ENCODE measurements at regions of chr12 and their contacts with region 1.

Region 1: DNA sequence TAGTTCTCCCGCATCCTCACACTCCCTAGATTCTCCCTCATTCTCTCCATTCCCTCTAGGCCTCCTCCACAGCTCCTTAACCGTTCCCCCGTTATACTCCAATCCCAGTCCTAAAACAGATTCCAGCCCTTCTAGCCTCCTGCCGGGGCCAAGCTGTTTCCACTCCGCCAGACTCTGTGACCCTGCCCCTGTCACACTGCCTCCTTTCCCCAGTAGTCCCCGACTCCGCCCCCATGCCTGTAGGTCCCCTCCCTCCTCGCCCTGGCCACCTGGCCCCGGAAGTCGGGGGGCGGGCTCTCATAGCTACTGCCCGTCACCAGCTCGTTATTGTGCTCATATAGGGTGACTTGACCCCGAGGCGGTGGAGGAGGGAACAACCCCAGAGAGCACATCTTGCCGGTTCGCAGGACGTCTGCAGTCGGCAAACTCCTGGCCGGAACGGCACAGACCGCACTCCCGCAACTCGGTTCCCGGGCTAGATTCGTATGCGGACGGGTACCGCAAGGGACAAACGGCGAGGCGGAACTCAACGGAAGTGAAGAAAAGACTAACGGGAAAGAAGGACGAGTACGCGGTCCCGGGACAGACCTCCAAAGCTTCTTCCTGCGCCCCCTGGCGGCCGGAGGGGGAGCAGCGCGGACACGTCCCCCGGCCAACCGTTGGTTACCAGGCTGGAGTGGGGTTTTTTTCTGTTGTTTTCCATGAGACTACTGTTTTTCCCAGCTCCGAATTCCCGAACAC is at the start of gene AAAS:
- DNase-seq: peak; percentile 95 to 99 (median 98)
- H3K4me3 ChIP-seq: peak within 1 kb of the TSS; percentile 71 to 97 (median 90)
- H3K27ac ChIP-seq: peak within 1 kb of the TSS; percentile 75 to 85
- H3K4me1 ChIP-seq: peaks cover 4 to 47% (median 36%) of the 10 kb centered on the region in 4 experiments
- H3K27me3 ChIP-seq: no peaks in the 10 kb centered on the region

Region 2: GRCh38 chr12:53159195-53159839 is 161.9 kb before region 1 on chr12:
- CTCF ChIA-PET with region 1: interaction called, 11 read pairs
- POLR2A ChIA-PET with region 1: no interaction called
- DNase-seq: peak; percentile 81 to 90 (median 85)
- H3K4me3 ChIP-seq: no peak overlapping the region
- H3K27ac ChIP-seq: no peak overlapping the region
- H3K4me1 ChIP-seq: peaks cover 0 to 8% (median 2%) of the 10 kb centered on the region in 4 experiments
- H3K27me3 ChIP-seq: no peaks in the 10 kb centered on the region

Region 3: GRCh38 chr12:53295070-53295890 is 26.0 kb before region 1 on chr12 and contains the start of gene PFDN5:
- CTCF ChIA-PET with region 1: interaction called, 171 read pairs
- POLR2A ChIA-PET with region 1: interaction called, 6 read pairs
- DNase-seq: peak; percentile 94 to 95 (median 94)
- H3K4me3 ChIP-seq: peak within 1 kb of the TSS; percentile 83 to 96 (median 89)
- H3K27ac ChIP-seq: peak within 1 kb of the TSS; percentile 93 to 96
- H3K4me1 ChIP-seq: peaks cover 5 to 48% (median 42%) of the 10 kb centered on the region in 4 experiments
- H3K27me3 ChIP-seq: no peaks in the 10 kb centered on the region

Region 4: DNA sequence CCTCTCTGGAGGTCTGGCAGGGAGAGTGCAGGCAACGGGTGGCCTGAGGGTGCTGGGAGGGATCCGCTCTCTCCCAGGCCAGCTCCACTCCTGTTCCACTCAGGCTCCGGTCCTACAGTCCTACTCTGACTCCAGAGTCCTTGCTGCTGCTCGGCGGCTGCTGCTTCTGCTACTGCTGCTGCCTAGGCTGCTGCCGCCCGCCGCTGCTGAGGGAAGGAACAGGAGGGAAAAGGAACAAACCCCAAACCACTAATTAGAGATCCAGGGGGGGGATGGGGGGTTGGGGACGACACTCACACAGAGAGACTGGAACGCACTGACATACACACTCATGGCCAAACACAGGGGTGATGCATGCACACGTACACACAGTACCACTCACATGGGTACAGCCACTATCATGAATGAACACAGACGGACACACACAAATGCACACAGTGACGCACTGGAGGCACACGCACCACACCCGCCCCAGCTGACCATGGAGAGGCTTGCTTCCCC is 15.0 kb after region 1 on chr12 and contains the start of gene SP7:
- CTCF ChIA-PET with region 1: interaction called, 489 read pairs
- POLR2A ChIA-PET with region 1: interaction called, 5 read pairs
- DNase-seq: peak; percentile 42 to 77 (median 72)
- H3K4me3 ChIP-seq: peak within 1 kb of the TSS in 5 of 7 experiments; percentile 9 to 55 (median 37)
- H3K27ac ChIP-seq: no peak within 1 kb of the TSS
- H3K4me1 ChIP-seq: peaks cover 0 to 36% (median 22%) of the 10 kb centered on the region in 4 experiments
- H3K27me3 ChIP-seq: peaks cover 0 to 14% (median 6%) of the 10 kb centered on the region in 5 experiments

Region 5: GRCh38 chr12:53352331-53353256 is 31.4 kb after region 1 on chr12:
- CTCF ChIA-PET with region 1: interaction called, 489 read pairs
- POLR2A ChIA-PET with region 1: no interaction called
- DNase-seq: peak; percentile 88 to 95 (median 90)
- H3K4me3 ChIP-seq: no peak overlapping the region
- H3K27ac ChIP-seq: no peak overlapping the region
- H3K4me1 ChIP-seq: peaks cover 1 to 8% (median 4%) of the 10 kb centered on the region in 4 experiments
- H3K27me3 ChIP-seq: no peaks in the 10 kb centered on the region

Measured in common myeloid progenitor, CD34-positive (primary cell).